Left lung (tissue), 14 donors: ENCODE measurements at regions of chr7 and their contacts with region 1.

Region 1: GRCh38 chr7:151936207-151936606 is 20.0 kb upstream of the GALNTL5 start:
- DNase-seq: no peak
- ATAC-seq: peak; percentile 6
- H3K4me3 ChIP-seq: no peak overlapping the region
- H3K27ac ChIP-seq: peak overlapping the region in 1 of 2 donors; percentile 80
- H3K4me1 ChIP-seq: peaks cover 11 to 40% of the 10 kb centered on the region in 2 donors
- H3K27me3 ChIP-seq: peaks cover 0 to 9% of the 10 kb centered on the region in 2 donors
- CTCF ChIP-seq: no peak

Region 2: DNA sequence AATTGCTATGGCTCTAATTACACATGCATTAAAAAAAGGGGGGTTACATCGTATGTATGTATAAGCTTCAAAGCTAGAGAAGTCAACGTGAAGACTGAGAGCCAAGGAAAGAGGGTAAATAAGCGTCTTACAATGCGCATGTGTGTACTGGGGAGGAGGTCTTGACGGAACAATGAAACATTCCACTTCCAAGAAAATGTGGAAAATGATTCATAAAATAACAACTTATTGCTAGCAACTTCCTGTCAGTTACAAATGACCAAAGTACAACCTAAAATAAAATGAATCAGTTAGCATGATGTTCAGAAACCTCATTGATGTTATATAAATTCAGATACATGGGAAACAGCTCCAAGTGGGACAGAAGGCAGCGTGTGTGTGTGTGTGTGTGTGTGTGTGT is 312.4 kb before region 1 on chr7:
- intact Hi-C with region 1: no loop called
- DNase-seq: no peak
- ATAC-seq: no peak
- H3K4me3 ChIP-seq: no peak overlapping the region
- H3K27ac ChIP-seq: no peak overlapping the region
- H3K4me1 ChIP-seq: no peaks in the 10 kb centered on the region
- H3K27me3 ChIP-seq: no peaks in the 10 kb centered on the region
- CTCF ChIP-seq: no peak

Region 3: GRCh38 chr7:151782598-151783448 is 153.4 kb before region 1 on chr7:
- intact Hi-C with region 1: loop called in 1 of 2 experiments (anchors 10 kb)
- DNase-seq: peak; percentile 51 to 96 (median 77)
- ATAC-seq: peak; percentile 95
- H3K4me3 ChIP-seq: peak overlapping the region; percentile 8 to 9
- H3K27ac ChIP-seq: no peak overlapping the region
- H3K4me1 ChIP-seq: peaks cover 7 to 14% of the 10 kb centered on the region in 2 donors
- H3K27me3 ChIP-seq: no peaks in the 10 kb centered on the region
- CTCF ChIP-seq: peak; percentile 78 to 95

Region 4: DNA sequence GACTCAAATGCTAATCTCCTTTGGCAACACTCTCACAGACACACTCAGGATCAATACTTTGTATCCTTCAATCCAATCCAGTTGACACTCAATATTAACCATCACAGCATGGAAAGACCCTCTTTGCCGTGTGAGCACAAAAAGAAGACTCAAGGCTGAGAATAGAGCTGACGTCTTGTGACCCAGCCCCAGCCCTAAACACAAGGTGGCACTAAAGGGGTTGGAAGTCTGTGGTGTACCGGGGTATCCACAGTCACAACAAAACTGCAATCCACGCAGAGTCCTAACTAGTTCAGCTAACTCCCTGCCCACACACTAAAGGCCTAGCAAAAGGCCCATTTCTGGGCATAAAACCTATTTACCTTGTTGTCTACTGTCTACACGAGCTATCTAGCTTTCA is 1023.4 kb after region 1 on chr7:
- intact Hi-C with region 1: no loop called
- DNase-seq: no peak
- ATAC-seq: no peak
- H3K4me3 ChIP-seq: no peak overlapping the region
- H3K27ac ChIP-seq: no peak overlapping the region
- H3K4me1 ChIP-seq: no peaks in the 10 kb centered on the region
- H3K27me3 ChIP-seq: no peaks in the 10 kb centered on the region
- CTCF ChIP-seq: no peak